ENCODE measurements at regions of chr11 and their contacts with region 1.

Region 1: DNA sequence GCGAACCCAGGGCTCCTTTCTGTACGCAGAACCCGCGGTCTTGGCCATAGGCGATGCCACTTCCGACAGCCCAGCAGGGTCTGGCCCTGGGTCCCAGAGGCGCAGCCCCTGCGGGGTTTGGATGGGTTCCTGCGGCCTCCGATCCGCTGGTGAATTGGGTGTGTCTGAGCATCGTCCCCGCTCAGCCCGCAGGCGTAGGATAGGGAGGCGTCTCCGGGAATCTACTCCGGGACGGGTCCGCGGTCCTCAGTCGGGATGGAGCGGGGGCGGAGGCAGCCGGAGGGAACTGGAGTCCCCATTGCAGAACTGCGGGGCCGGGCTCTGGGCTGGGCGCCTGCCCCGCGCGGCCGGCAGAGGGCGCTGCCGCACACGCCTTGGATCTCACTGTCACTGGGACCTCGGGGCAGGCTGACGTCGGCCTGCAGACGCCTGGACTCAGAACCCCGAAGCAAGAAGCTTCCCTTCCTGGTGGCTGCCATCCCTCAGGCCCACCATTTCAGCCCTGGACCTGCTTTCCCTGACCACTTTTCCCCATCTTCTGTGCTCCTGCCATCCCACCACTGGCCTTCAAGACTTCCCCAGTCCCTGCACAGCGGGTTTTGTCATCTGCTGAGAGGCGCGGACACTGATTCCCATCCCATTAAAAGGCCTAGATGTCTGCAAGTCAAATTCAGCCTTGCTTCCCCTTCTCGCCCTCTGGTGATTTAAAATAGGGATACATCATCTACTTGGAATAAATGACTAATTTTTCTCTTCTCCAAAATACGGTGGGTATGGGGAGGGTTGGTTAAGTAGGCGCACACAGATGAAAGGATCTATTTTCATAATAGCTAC is 38.3 kb upstream of the CREB3L1 start:
- DNase-seq: peak; percentile 73 to 83 (median 83)
- H3K4me3 ChIP-seq: peak overlapping the region; percentile 19 to 73 (median 32)
- H3K27ac ChIP-seq: no peak overlapping the region
- H3K4me1 ChIP-seq: peaks cover 5 to 40% (median 32%) of the 10 kb centered on the region in 4 experiments
- H3K27me3 ChIP-seq: peaks cover 0 to 25% (median 10%) of the 10 kb centered on the region in 5 experiments

Region 2: DNA sequence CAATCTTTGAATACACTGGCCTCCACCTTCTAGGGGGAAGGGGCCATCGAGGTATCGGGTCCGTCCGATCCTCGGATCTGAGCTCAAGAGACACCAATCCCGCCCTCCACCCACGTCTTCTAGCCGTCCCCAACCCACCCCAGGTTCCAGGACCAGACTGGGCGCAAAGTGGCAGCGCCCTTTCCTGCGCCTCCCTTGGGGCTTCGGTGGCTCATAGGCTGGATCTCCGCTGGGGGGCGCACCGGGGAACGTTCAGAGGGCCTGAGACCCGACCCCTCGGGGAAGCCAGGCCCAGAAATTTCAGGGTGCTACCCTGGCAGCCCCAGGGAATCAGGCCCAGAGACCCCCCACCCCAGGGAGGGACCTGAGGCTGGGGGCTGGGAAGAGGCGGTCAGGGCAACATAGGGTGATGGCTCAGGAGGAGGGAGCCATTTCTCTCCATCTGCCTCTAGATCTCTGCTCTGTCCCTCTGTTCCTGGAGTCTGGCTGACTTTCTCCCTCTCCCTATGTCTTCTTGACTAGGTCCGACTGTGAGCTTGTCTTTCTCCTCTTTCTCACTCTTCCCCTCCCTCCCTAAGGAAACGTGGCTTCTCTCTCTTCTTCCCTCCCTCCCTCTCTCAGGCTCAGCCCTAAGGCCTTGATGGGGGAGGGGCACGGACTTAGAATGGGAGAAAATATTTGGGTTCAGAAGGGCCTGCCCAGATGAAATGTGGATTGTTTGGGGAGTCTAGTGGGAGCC is 39.4 kb after region 1 on chr11:
- CTCF ChIA-PET with region 1: interaction called, 14 read pairs
- POLR2A ChIA-PET with region 1: no interaction called
- DNase-seq: peak; percentile 35 to 60 (median 57)
- H3K4me3 ChIP-seq: peak overlapping the region in 6 of 7 experiments; percentile 25 to 70 (median 56)
- H3K27ac ChIP-seq: peak overlapping the region in 1 of 2 experiments; percentile 43
- H3K4me1 ChIP-seq: peaks cover 0 to 27% (median 22%) of the 10 kb centered on the region in 4 experiments
- H3K27me3 ChIP-seq: peaks cover 2 to 42% (median 12%) of the 10 kb centered on the region in 5 experiments

Region 3: GRCh38 chr11:46322759-46323158 is 83.6 kb after region 1 on chr11:
- CTCF ChIA-PET with region 1: interaction called, 240 read pairs
- POLR2A ChIA-PET with region 1: no interaction called
- DNase-seq: peak in 1 of 3 donors; percentile 39
- H3K4me3 ChIP-seq: no peak overlapping the region
- H3K27ac ChIP-seq: no peak overlapping the region
- H3K4me1 ChIP-seq: peaks cover 10 to 56% (median 31%) of the 10 kb centered on the region in 4 experiments
- H3K27me3 ChIP-seq: no peaks in the 10 kb centered on the region

Region 4: DNA sequence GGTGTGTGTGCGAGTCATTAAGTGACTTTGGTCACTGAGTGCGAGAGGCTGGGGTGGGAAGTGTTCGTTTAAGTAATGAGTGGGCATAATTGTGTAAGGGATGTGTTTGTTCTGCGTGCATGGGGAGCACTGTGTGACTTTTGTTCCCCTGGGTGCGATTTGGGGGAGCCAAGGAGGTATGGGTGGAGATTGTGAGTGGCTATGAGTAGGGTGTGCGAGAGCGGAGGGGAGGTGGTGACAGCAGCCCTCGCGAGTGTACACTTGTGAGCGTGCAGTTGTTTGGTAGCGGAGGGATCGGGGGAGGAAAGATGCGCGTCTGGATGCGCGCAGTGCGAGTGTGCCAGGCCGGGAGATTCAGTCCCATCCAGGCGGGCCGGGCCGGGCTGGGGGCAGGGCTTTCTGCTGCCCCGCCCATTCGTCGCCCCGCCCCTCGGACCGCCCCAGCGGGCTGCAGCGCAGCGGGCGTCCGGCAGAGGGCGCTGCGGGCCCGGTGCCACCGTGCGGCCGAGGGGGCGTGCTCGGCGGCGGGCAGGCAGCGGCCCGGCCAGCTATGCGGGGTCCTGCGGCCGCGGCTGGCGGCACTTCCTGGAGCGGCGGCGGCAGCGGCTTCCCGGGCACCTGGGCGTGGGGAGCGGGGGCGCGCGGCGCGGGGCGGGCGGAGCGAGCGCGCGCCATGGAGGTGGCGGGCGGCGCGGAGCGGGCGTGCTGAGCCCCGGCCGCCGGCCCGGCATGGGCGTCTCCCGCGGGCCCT is 107.9 kb after region 1 on chr11 and contains the start of gene DGKZ:
- CTCF ChIA-PET with region 1: interaction called, 16 read pairs
- POLR2A ChIA-PET with region 1: interaction called, 7 read pairs
- DNase-seq: peak; percentile 83 to 91 (median 91)
- H3K4me3 ChIP-seq: peak within 1 kb of the TSS; percentile 67 to 97 (median 84)
- H3K27ac ChIP-seq: peak within 1 kb of the TSS; percentile 54 to 79
- H3K4me1 ChIP-seq: peaks cover 20 to 88% (median 84%) of the 10 kb centered on the region in 4 experiments
- H3K27me3 ChIP-seq: no peaks in the 10 kb centered on the region

Measured in common myeloid progenitor, CD34-positive (primary cell).